ENCODE measurements at regions of chr17 and their contacts with region 1.

Region 1: GRCh38 chr17:78112518-78113226 is 15.9 kb downstream of the TMC6 start:
- DNase-seq: peak; percentile 61 to 81
- H3K4me3 ChIP-seq: no peak overlapping the region
- H3K27ac ChIP-seq: no peak overlapping the region
- H3K4me1 ChIP-seq: peaks cover 0 to 7% (median 2%) of the 10 kb centered on the region in 4 donors
- H3K27me3 ChIP-seq: peaks cover 0 to 34% of the 10 kb centered on the region in 2 donors
- CTCF ChIP-seq: peak; percentile 95 to 99

Region 2: GRCh38 chr17:78176548-78177025 is 63.9 kb after region 1 on chr17:
- intact Hi-C with region 1: loop called (anchors 2 kb)
- DNase-seq: peak; percentile 56 to 81
- H3K4me3 ChIP-seq: no peak overlapping the region
- H3K27ac ChIP-seq: no peak overlapping the region
- H3K4me1 ChIP-seq: peaks cover 11 to 79% (median 50%) of the 10 kb centered on the region in 4 donors
- H3K27me3 ChIP-seq: no peaks in the 10 kb centered on the region
- CTCF ChIP-seq: peak; percentile 75 to 90

Region 3: GRCh38 chr17:78250891-78251794 is 138.5 kb after region 1 on chr17:
- intact Hi-C with region 1: loop called (anchors 2 kb)
- DNase-seq: peak; percentile 67 to 84
- H3K4me3 ChIP-seq: no peak overlapping the region
- H3K27ac ChIP-seq: no peak overlapping the region
- H3K4me1 ChIP-seq: peaks cover 0 to 15% (median 7%) of the 10 kb centered on the region in 4 donors
- H3K27me3 ChIP-seq: peaks cover 0 to 19% of the 10 kb centered on the region in 2 donors
- CTCF ChIP-seq: peak; percentile 97 to 98

Measured in tibial artery (tissue), 4 donors.